ENCODE measurements at regions of chr12 and their contacts with region 1.

Region 1: DNA sequence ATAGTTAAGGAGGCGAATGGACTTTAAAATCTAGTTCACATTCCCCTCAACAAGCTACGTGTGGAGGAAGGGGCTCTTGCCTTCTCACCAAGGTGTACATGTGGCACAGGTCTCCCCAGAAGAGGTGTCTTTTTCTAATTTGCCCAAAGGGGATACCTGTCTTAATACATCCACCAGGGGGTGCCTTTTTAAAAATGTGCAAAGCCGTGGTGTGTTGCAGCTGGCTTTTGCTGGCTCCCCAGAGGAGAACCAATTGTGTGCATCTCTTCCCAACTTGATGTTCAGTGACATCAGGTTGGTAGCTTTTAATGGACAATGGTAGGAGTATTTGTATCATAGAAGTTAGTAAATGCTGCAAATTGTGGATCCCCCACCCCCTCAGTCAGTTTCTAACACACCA is 33.8 kb downstream of the CREBL2 start:
- DNase-seq: peak; percentile 47
- H3K4me3 Mint-ChIP-seq: peak overlapping the region; percentile 29
- H3K27ac Mint-ChIP-seq: peak overlapping the region; percentile 82
- H3K4me1 Mint-ChIP-seq: peaks cover 21% of the 10 kb centered on the region
- H3K27me3 Mint-ChIP-seq: no peaks in the 10 kb centered on the region

Region 2: DNA sequence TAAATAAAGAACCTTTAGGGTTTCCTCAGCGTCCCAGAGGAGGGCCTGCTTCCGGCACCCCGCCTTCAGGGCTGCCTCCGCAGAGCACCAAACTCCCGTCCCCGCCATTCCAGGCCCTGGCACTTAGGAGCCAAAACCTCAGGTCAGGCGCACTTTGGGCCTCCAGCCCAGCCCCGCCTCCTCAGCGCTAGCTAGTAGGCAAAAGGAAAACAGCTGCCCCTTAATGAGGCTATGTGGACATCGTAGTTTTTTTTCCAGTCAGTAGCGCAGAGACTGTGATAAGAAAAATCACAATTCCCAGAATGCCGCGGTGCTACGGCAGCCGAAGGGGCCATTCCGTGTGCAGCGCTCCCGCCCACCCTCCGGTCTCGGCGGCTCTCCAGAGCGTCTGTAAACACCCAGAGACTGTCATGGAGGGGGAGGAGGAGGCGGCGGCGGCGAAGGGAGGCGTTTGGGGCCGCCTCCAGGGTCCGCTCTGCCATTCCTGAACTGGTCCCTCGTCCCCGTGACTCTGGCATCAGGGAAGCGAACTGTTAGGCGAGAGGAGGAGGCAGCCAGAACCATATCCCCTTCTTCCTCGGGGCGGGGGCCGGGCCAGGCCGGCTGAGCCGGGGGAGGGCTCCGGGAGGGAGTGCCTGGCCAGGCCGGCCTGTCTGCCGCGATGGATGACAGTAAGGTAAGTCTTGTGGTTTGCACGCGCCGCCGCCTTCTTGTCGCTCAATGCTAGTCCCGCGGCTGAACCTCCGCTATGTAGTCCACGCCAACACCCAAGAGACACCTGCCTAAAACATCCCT is 33.8 kb before region 1 on chr12 and contains the start of gene CREBL2:
- CTCF ChIA-PET with region 1: interaction called, 7 read pairs
- POLR2A ChIA-PET with region 1: interaction called, 4 read pairs
- intact Hi-C with region 1: loop called (anchors 1 kb)
- DNase-seq: peak; percentile 92
- H3K4me3 Mint-ChIP-seq: peak within 1 kb of the TSS; percentile 82
- H3K27ac Mint-ChIP-seq: peak within 1 kb of the TSS; percentile 95
- H3K4me1 Mint-ChIP-seq: peaks cover 54% of the 10 kb centered on the region
- H3K27me3 Mint-ChIP-seq: no peaks in the 10 kb centered on the region
- total RNA-seq, gene CREBL2: 30.4 to 32.2 TPM

Region 3: DNA sequence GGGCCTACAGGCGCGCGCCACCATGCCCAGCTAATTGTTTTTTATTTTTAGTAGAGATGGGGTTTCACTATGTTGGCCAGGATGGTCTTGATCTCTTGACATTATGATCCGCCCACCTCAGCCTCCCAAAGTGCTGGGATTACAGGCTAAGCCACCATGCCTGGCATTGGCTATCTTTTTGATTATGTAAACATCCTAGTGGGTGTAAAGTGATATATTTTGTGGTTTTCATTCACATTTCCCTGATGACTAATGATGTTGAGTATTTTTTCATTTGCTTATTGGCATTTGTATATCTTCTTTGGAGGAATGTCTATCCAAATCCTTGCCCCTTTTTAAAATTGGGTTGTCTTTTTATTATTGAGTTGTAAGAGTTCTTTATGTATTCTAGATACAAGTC is 17.5 kb before region 1 on chr12:
- CTCF ChIA-PET with region 1: interaction called, 28 read pairs
- POLR2A ChIA-PET with region 1: no interaction called
- intact Hi-C with region 1: no loop called
- DNase-seq: no peak
- H3K4me3 Mint-ChIP-seq: no peak overlapping the region
- H3K27ac Mint-ChIP-seq: no peak overlapping the region
- H3K4me1 Mint-ChIP-seq: peaks cover 78% of the 10 kb centered on the region
- H3K27me3 Mint-ChIP-seq: no peaks in the 10 kb centered on the region

Region 4: GRCh38 chr12:12696562-12697383 is 51.3 kb after region 1 on chr12:
- CTCF ChIA-PET with region 1: interaction called, 19 read pairs
- POLR2A ChIA-PET with region 1: interaction called, 5 read pairs
- intact Hi-C with region 1: loop called (anchors 2 kb)
- DNase-seq: peak; percentile 92
- H3K4me3 Mint-ChIP-seq: peak overlapping the region; percentile 92
- H3K27ac Mint-ChIP-seq: peak overlapping the region; percentile 98
- H3K4me1 Mint-ChIP-seq: peaks cover 65% of the 10 kb centered on the region
- H3K27me3 Mint-ChIP-seq: no peaks in the 10 kb centered on the region

Region 5: GRCh38 chr12:12736759-12737676 is 91.5 kb after region 1 on chr12:
- CTCF ChIA-PET with region 1: interaction called, 41 read pairs
- POLR2A ChIA-PET with region 1: interaction called, 3 read pairs
- intact Hi-C with region 1: no loop called
- DNase-seq: peak; percentile 76
- H3K4me3 Mint-ChIP-seq: peak overlapping the region; percentile 59
- H3K27ac Mint-ChIP-seq: peak overlapping the region; percentile 88
- H3K4me1 Mint-ChIP-seq: peaks cover 46% of the 10 kb centered on the region
- H3K27me3 Mint-ChIP-seq: no peaks in the 10 kb centered on the region